CD8-positive, alpha-beta T cell (primary cell): ENCODE measurements at regions of chr5 and their contacts with region 1.

Region 1: DNA sequence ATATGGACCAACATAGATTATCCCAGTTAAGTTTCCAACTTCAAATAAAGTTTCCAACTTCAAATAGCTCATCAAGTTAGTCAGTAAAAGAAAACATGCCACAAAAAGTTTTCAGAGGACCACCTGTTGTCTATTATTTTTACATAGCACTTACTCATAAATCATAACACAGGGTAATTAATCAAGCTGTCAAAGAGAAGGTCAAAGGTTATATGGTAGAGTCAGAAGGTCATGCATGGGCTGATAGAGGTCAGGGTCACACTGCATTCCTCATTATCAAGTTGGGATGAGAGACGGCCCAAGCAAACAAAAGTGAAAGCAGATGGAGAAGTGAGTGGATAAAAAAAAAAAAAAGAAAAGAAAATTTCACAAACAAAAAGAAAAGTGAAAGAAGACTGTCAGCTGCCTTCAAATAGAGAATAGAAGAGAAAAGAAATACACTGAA is 145.5 kb upstream of the POU5F2 start:
- DNase-seq: peak in 2 of 9 experiments; percentile 2 to 20
- ATAC-seq: no peak
- H3K4me3 ChIP-seq: no peak overlapping the region
- H3K4me3 Mint-ChIP-seq: peak overlapping the region; percentile 54
- H3K27ac ChIP-seq: no peak overlapping the region
- H3K27ac Mint-ChIP-seq: no peak overlapping the region
- H3K4me1 ChIP-seq: no peaks in the 10 kb centered on the region
- H3K4me1 Mint-ChIP-seq: peaks cover 16% of the 10 kb centered on the region
- H3K27me3 ChIP-seq: no peaks in the 10 kb centered on the region
- H3K27me3 Mint-ChIP-seq: no peaks in the 10 kb centered on the region
- CTCF ChIP-seq: no peak

Region 2: GRCh38 chr5:93831449-93831848 is 55.5 kb before region 1 on chr5:
- CTCF ChIA-PET with region 1: no interaction called
- POLR2A ChIA-PET with region 1: no interaction called
- intact Hi-C with region 1: no loop called
- DNase-seq: no peak
- ATAC-seq: no peak
- H3K4me3 ChIP-seq: no peak overlapping the region
- H3K4me3 Mint-ChIP-seq: no peak overlapping the region
- H3K27ac ChIP-seq: no peak overlapping the region
- H3K27ac Mint-ChIP-seq: no peak overlapping the region
- H3K4me1 ChIP-seq: no peaks in the 10 kb centered on the region
- H3K4me1 Mint-ChIP-seq: no peaks in the 10 kb centered on the region
- H3K27me3 ChIP-seq: no peaks in the 10 kb centered on the region
- H3K27me3 Mint-ChIP-seq: no peaks in the 10 kb centered on the region
- CTCF ChIP-seq: no peak

Region 3: GRCh38 chr5:94102849-94103248 is 215.9 kb after region 1 on chr5:
- CTCF ChIA-PET with region 1: no interaction called
- POLR2A ChIA-PET with region 1: no interaction called
- intact Hi-C with region 1: loop called in 1 of 2 experiments (anchors 10 kb)
- DNase-seq: no peak
- ATAC-seq: no peak
- H3K4me3 ChIP-seq: no peak overlapping the region
- H3K4me3 Mint-ChIP-seq: no peak overlapping the region
- H3K27ac ChIP-seq: no peak overlapping the region
- H3K27ac Mint-ChIP-seq: peak overlapping the region; percentile 6
- H3K4me1 ChIP-seq: peaks cover 5% of the 10 kb centered on the region
- H3K4me1 Mint-ChIP-seq: peaks cover 69% of the 10 kb centered on the region
- H3K27me3 ChIP-seq: no peaks in the 10 kb centered on the region
- H3K27me3 Mint-ChIP-seq: no peaks in the 10 kb centered on the region
- CTCF ChIP-seq: no peak

Region 4: DNA sequence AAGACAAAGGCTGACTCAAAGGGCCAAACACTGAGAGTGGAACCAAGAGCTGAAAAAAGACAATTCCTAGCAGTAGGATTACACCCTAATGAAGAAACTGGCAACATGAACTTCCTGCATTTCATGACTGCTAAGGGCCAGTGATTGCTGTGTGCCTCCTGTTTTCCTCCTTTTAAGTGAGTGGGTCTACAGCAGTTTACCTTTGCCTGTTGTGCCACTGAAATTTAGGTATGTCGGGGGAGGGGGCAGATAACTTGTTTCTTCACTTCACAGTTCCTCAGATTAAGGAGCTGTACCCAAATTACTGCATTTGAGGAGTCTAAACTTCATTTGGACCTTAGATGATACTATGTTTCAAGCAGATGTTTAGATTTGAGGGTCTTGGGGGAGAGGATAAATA is 1206.3 kb after region 1 on chr5:
- CTCF ChIA-PET with region 1: no interaction called
- POLR2A ChIA-PET with region 1: no interaction called
- intact Hi-C with region 1: no loop called
- DNase-seq: no peak
- ATAC-seq: no peak
- H3K4me3 ChIP-seq: no peak overlapping the region
- H3K4me3 Mint-ChIP-seq: no peak overlapping the region
- H3K27ac ChIP-seq: no peak overlapping the region
- H3K27ac Mint-ChIP-seq: no peak overlapping the region
- H3K4me1 ChIP-seq: no peaks in the 10 kb centered on the region
- H3K4me1 Mint-ChIP-seq: no peaks in the 10 kb centered on the region
- H3K27me3 ChIP-seq: no peaks in the 10 kb centered on the region
- H3K27me3 Mint-ChIP-seq: no peaks in the 10 kb centered on the region
- CTCF ChIP-seq: no peak